GM12878 (cell line): ENCODE measurements at regions of chr20 and their contacts with region 1.

Region 1: GRCh38 chr20:22921595-22922421 is 113.3 kb upstream of the SSTR4 start:
- DNase-seq: no peak
- ATAC-seq: no peak
- H3K4me3 ChIP-seq: no peak overlapping the region
- H3K27ac ChIP-seq: no peak overlapping the region
- H3K4me1 ChIP-seq: no peaks in the 10 kb centered on the region
- H3K27me3 ChIP-seq: no peaks in the 10 kb centered on the region
- CTCF ChIP-seq: no peak
- EP300 ChIP-seq: no peak
- POLR2A ChIP-seq: no peak
- RAD21 ChIP-seq: no peak

Region 2: GRCh38 chr20:22905658-22906057 is 16.1 kb before region 1 on chr20:
- CTCF ChIA-PET with region 1: interaction called, 10 read pairs
- POLR2A ChIA-PET with region 1: no interaction called
- RAD21 ChIA-PET with region 1: interaction called, 7 read pairs
- SMC1A ChIA-PET with region 1: interaction called, 22 read pairs
- in situ Hi-C with region 1: no loop called
- intact Hi-C with region 1: no loop called
- DNase-seq: no peak
- ATAC-seq: peak; percentile 66
- H3K4me3 ChIP-seq: no peak overlapping the region
- H3K27ac ChIP-seq: no peak overlapping the region
- H3K4me1 ChIP-seq: no peaks in the 10 kb centered on the region
- H3K27me3 ChIP-seq: no peaks in the 10 kb centered on the region
- CTCF ChIP-seq: no peak
- EP300 ChIP-seq: no peak
- POLR2A ChIP-seq: no peak
- RAD21 ChIP-seq: no peak

Region 3: GRCh38 chr20:22931653-22932608 is 10.1 kb after region 1 on chr20:
- CTCF ChIA-PET with region 1: interaction called, 5 read pairs
- POLR2A ChIA-PET with region 1: interaction called, 5 read pairs
- RAD21 ChIA-PET with region 1: interaction called, 5 read pairs
- SMC1A ChIA-PET with region 1: interaction called, 16 read pairs
- in situ Hi-C with region 1: no loop called
- intact Hi-C with region 1: no loop called
- DNase-seq: no peak
- ATAC-seq: no peak
- H3K4me3 ChIP-seq: no peak overlapping the region
- H3K27ac ChIP-seq: no peak overlapping the region
- H3K4me1 ChIP-seq: no peaks in the 10 kb centered on the region
- H3K27me3 ChIP-seq: no peaks in the 10 kb centered on the region; a peak in 1 of 4 replicates
- CTCF ChIP-seq: no peak
- EP300 ChIP-seq: no peak
- POLR2A ChIP-seq: no peak
- RAD21 ChIP-seq: no peak

Region 4: GRCh38 chr20:22954661-22955060 is 32.9 kb after region 1 on chr20:
- CTCF ChIA-PET with region 1: no interaction called
- POLR2A ChIA-PET with region 1: no interaction called
- RAD21 ChIA-PET with region 1: no interaction called
- SMC1A ChIA-PET with region 1: no interaction called
- in situ Hi-C with region 1: no loop called
- intact Hi-C with region 1: no loop called
- DNase-seq: no peak
- ATAC-seq: no peak
- H3K4me3 ChIP-seq: no peak overlapping the region
- H3K27ac ChIP-seq: no peak overlapping the region
- H3K4me1 ChIP-seq: no peaks in the 10 kb centered on the region
- H3K27me3 ChIP-seq: no peaks in the 10 kb centered on the region
- CTCF ChIP-seq: no peak
- EP300 ChIP-seq: no peak
- POLR2A ChIP-seq: no peak
- RAD21 ChIP-seq: no peak